Psoas muscle (tissue), 8 donors: ENCODE measurements at regions of chr9 and their contacts with region 1.

Region 1: DNA sequence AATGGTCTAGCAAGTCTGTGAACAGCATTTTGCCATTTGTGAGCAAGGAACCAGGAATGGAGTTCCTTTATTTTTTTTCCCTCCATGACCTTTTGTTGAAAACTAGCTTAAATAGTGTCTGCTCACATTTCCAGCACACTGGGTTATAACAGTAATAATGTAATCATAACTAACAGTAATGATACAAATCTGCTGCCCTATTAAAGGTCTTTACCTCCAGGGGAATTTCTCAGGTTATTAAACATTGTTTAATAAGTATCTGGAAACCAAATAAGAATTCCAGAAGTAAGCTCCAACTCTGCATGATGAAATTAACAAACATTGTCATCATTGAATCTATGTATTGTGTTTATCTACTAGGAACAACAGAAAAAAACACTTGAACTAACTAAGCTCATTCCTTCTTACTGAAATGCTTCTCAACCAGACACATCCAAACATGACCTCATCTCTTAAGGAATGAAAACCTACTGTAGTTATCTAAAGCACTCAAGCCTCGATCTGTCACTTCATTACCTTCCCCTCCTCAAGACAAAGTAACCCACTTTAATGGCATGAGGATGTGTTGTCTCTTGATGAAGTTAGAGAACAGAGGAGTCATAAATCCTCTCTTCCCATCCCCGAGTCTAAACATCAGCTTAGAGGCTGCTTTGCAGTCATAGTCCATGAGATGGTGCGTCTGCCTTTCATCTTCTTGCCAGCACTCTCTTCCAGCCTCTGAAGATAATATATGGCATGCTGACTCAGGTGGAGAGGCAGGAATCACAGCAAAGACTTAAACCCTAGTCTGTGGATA is 86.6 kb downstream of the CEMIP2 start:
- DNase-seq: no peak
- ATAC-seq: peak in 3 of 4 donors; percentile 33 to 51 (median 46)
- H3K4me3 ChIP-seq: no peak overlapping the region
- H3K27ac ChIP-seq: no peak overlapping the region
- H3K4me1 ChIP-seq: no peaks in the 10 kb centered on the region
- H3K27me3 ChIP-seq: no peaks in the 10 kb centered on the region
- CTCF ChIP-seq: no peak

Region 2: DNA sequence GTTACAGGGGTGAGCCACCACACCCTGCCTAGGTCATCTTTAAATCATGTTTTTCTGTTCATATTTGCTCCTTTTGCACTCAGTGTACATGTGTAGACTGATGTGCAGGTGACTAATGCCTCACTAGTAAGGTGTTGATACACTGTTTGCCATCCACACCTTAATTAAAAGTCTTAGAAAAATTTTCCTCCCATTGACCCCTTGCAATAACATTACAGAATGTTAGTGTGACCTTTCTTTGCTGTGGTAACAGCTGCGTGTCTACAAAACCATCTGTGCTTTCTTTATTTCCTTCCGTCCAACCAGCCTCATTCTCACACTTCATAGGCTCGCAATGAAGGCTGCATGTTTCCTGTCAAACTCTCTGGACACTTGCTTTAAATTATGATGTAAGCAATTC is 93.2 kb after region 1 on chr9:
- intact Hi-C with region 1: loop called in 1 of 2 experiments (anchors 1 kb)
- DNase-seq: no peak
- ATAC-seq: no peak
- H3K4me3 ChIP-seq: no peak overlapping the region
- H3K27ac ChIP-seq: no peak overlapping the region
- H3K4me1 ChIP-seq: no peaks in the 10 kb centered on the region
- H3K27me3 ChIP-seq: no peaks in the 10 kb centered on the region
- CTCF ChIP-seq: no peak